Sigmoid colon (tissue), 7 donors: ENCODE measurements at regions of chr3 and their contacts with region 1.

Region 1: GRCh38 chr3:171646357-171647133 is 163.7 kb downstream of the PLD1 start:
- DNase-seq: no peak
- H3K4me3 ChIP-seq: no peak overlapping the region
- H3K27ac ChIP-seq: peak overlapping the region in 3 of 4 donors; percentile 2 to 41 (median 37)
- H3K4me1 ChIP-seq: peaks cover 0 to 7% (median 2%) of the 10 kb centered on the region in 4 donors
- H3K27me3 ChIP-seq: no peaks in the 10 kb centered on the region
- CTCF ChIP-seq: peak; percentile 20 to 61 (median 52)
- EP300 ChIP-seq: no peak
- POLR2A ChIP-seq: no peak

Region 2: GRCh38 chr3:171001957-171002694 is 644.4 kb before region 1 on chr3:
- intact Hi-C with region 1: no loop called
- DNase-seq: no peak
- H3K4me3 ChIP-seq: no peak overlapping the region
- H3K27ac ChIP-seq: no peak overlapping the region
- H3K4me1 ChIP-seq: peaks cover 0 to 30% (median 11%) of the 10 kb centered on the region in 4 donors
- H3K27me3 ChIP-seq: no peaks in the 10 kb centered on the region
- CTCF ChIP-seq: no peak
- EP300 ChIP-seq: no peak
- POLR2A ChIP-seq: no peak

Region 3: DNA sequence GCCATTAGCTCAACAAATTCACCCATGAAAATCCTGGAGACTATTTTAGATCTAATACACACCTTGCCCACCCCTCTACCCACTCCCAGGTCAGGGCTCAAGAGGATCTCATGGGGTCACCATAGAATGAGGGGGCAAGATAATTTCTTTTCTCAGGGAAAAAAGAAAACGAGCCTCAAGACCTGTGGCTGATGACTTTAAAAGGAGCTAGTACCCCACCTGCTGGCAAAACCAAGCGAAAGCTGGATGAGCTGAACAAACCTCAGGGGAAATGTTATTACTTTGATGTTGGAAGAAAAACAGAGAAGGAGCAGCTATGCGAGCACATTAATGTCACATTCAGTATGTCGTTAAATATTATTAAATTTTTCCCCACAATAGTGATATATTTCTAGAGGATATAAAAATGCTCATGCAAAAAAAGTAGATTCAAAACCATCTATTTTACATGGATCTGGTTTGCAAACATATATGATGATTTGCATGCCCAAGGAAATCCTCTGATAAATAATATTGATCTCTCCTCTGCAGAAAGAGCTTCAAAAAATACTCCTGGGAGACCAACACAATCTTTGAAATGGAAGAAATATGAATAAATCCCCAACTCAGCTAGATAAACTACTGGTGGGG is 126.0 kb after region 1 on chr3:
- intact Hi-C with region 1: loop called (anchors 2 kb)
- DNase-seq: peak; percentile 68
- H3K4me3 ChIP-seq: no peak overlapping the region
- H3K27ac ChIP-seq: peak overlapping the region in 1 of 4 donors; percentile 65
- H3K4me1 ChIP-seq: peaks cover 0 to 17% (median 13%) of the 10 kb centered on the region in 4 donors
- H3K27me3 ChIP-seq: no peaks in the 10 kb centered on the region
- CTCF ChIP-seq: peak in 3 of 4 experiments; percentile 52 to 67 (median 63)
- EP300 ChIP-seq: no peak
- POLR2A ChIP-seq: no peak

Region 4: DNA sequence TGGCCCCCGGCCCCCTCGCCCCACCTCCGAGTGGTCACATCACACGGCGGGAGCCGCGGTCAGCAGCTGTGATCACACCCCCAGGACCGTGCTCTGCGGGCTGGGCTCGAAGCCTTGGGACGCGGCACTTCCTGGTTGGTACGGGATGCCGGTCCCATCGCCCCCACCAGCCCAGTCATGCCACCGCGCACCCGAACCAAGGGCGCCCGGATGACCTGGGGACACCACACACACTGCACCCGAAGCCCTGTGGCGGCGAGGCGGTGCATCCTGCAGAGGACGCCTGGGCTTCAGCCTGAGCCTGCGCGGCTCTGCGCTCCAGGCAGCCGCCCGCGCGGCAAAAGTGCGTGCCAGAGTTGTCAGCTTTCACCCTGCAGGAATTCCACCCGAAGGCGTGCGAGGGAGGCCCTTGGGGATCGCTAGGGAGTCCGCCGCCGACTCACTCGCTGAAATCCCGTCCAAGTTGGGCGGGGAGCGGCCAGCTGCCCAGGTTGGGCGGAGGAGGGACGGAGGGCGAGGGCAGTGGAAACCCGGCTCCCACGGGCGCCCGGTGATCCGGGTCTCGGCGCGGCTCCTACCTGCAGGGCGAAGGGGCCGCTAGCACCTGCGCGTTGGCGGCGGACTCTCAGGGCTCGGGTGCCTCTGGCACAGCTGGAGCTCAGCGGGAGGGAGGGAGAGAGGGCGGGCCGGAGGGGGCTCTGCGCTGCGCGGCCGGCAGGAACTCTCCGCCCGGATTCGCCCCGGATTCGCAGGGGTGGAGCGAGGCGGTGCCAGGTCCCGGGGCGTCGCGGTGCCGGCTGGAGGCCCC is 163.5 kb after region 1 on chr3 and contains the start of gene PLD1:
- intact Hi-C with region 1: no loop called
- DNase-seq: peak; percentile 94
- H3K4me3 ChIP-seq: peak within 1 kb of the TSS; percentile 33 to 73 (median 56)
- H3K27ac ChIP-seq: peak within 1 kb of the TSS; percentile 76 to 94 (median 82)
- H3K4me1 ChIP-seq: peaks cover 0 to 12% (median 6%) of the 10 kb centered on the region in 4 donors
- H3K27me3 ChIP-seq: no peaks in the 10 kb centered on the region
- CTCF ChIP-seq: no peak
- EP300 ChIP-seq: no peak
- POLR2A ChIP-seq: peak in 1 of 2 donors; percentile 52
- total RNA-seq, gene PLD1: 8.6 to 19.9 (median 10.8) TPM

Region 5: DNA sequence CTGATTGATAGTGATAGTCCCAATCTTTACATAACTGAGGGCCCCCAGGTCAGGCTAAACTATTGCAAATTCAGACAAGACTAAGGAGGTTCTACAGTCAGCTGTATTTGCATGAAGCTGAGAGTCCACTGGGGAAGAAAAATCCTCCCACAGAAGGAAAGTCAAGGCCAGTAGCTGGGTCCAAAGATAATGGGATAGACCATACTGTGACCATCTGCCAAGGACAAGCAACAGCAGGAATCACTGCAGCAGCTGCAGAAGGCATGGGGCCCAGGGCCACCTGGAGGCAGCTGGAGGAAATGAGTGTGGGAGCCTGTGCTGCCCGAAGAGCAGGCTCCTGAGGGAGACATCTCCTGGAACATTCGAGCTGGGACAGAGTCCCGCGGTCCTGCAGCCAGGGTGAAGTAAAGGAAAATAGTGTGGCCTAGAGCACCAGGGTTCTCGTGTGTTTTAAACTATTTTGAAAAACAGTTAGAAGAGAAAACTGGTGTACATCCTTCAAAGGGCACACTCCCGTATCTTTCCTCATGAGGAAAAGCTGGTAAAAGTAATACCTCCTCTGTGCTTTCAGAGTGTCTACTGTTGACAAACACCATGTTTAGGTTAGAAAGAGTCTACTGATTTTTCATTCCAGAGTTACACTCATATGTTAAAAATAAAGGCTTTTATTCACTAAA is 183.4 kb after region 1 on chr3:
- intact Hi-C with region 1: loop called (anchors 5 kb)
- DNase-seq: peak; percentile 89
- H3K4me3 ChIP-seq: no peak overlapping the region
- H3K27ac ChIP-seq: peak overlapping the region; percentile 35 to 54 (median 46)
- H3K4me1 ChIP-seq: peaks cover 0 to 23% (median 14%) of the 10 kb centered on the region in 4 donors
- H3K27me3 ChIP-seq: no peaks in the 10 kb centered on the region
- CTCF ChIP-seq: peak in 3 of 4 experiments; percentile 44 to 58 (median 49)
- EP300 ChIP-seq: no peak
- POLR2A ChIP-seq: no peak

Region 6: GRCh38 chr3:172341482-172342059 is 695.0 kb after region 1 on chr3:
- intact Hi-C with region 1: loop called (anchors 2 kb)
- DNase-seq: no peak
- H3K4me3 ChIP-seq: no peak overlapping the region
- H3K27ac ChIP-seq: no peak overlapping the region
- H3K4me1 ChIP-seq: no peaks in the 10 kb centered on the region
- H3K27me3 ChIP-seq: no peaks in the 10 kb centered on the region
- CTCF ChIP-seq: peak in 2 of 4 experiments; percentile 51 to 74
- EP300 ChIP-seq: no peak
- POLR2A ChIP-seq: no peak

Region 7: GRCh38 chr3:172476347-172476746 is 829.8 kb after region 1 on chr3:
- intact Hi-C with region 1: loop called (anchors 10 kb)
- DNase-seq: no peak
- H3K4me3 ChIP-seq: peak overlapping the region in 2 of 4 donors; percentile 31 to 37
- H3K27ac ChIP-seq: no peak overlapping the region
- H3K4me1 ChIP-seq: no peaks in the 10 kb centered on the region
- H3K27me3 ChIP-seq: no peaks in the 10 kb centered on the region
- CTCF ChIP-seq: no peak
- EP300 ChIP-seq: no peak
- POLR2A ChIP-seq: no peak